HepG2 (cell line): ENCODE measurements at regions of chr4 and their contacts with region 1.

Region 1: GRCh38 chr4:99949034-99949998 is 759 bp downstream of the H2AZ1 start:
- DNase-seq: peak; percentile 92
- ATAC-seq: peak; percentile 16
- H3K4me3 ChIP-seq: peak overlapping the region; percentile 88 to 96 (median 92)
- H3K27ac ChIP-seq: peak overlapping the region; percentile 98
- H3K4me1 ChIP-seq: peaks cover 33% of the 10 kb centered on the region
- H3K27me3 ChIP-seq: no peaks in the 10 kb centered on the region; a peak in 1 of 5 replicates
- CTCF ChIP-seq: peak; percentile 89
- EP300 ChIP-seq: 0 out of 4 replicates have a peak, but pooled peaks of 1 of the 2 experiments have one; percentile 20
- POLR2A ChIP-seq: peak; percentile 32 to 56; a peak in 2 of 4 replicates
- RAD21 ChIP-seq: peak; percentile 29; the same call in 1 of the 2 replicates

Region 2: DNA sequence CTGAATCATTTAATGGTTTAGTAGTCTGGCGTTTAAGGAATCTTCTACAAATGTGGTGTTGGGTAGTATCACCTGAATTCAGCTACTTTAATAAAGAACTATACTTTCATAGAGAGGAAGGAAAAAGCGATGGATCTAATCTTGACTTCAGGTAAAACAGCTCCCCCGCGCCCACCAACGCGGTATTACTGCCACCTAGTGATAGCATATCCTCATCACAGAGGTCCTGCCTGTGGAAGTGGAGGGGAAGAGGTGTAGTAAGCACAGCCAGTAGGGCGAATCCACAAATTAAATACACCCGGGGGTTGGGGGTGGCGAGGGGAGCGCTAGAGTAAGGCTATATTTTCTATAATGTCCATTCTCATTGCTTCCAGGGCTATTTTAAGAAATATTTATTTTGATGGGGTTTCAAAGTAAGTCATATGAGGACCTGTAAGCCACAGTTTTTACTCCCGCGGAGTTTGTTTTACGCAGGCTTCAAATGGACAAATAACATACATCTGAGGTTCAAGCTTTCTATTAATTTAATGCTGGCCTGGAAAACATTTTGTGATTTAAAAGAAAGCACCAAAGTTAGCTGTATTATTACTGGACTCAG is 141.0 kb before region 1 on chr4:
- CTCF ChIA-PET with region 1: no interaction called
- POLR2A ChIA-PET with region 1: no interaction called
- in situ Hi-C with region 1: loop called (anchors 5 kb)
- intact Hi-C with region 1: no loop called
- DNase-seq: peak; percentile 49
- ATAC-seq: peak; percentile 96
- H3K4me3 ChIP-seq: no peak overlapping the region
- H3K27ac ChIP-seq: no peak overlapping the region
- H3K4me1 ChIP-seq: no peaks in the 10 kb centered on the region
- H3K27me3 ChIP-seq: no peaks in the 10 kb centered on the region; a peak in 1 of 5 replicates
- CTCF ChIP-seq: peak; percentile 89
- EP300 ChIP-seq: no peak
- POLR2A ChIP-seq: no peak
- RAD21 ChIP-seq: peak; percentile 73

Region 3: GRCh38 chr4:99894161-99894997 is 54.9 kb before region 1 on chr4 and contains the start of gene LAMTOR3:
- CTCF ChIA-PET with region 1: no interaction called
- POLR2A ChIA-PET with region 1: interaction called, 20 read pairs
- in situ Hi-C with region 1: loop called (anchors 5 kb)
- intact Hi-C with region 1: loop called (anchors 1 kb)
- DNase-seq: peak; percentile 86
- ATAC-seq: peak; percentile 99
- H3K4me3 ChIP-seq: peak within 1 kb of the TSS; percentile 87 to 98 (median 94)
- H3K27ac ChIP-seq: peak within 1 kb of the TSS; percentile 76
- H3K4me1 ChIP-seq: peaks cover 23% of the 10 kb centered on the region
- H3K27me3 ChIP-seq: no peaks in the 10 kb centered on the region; a peak in 1 of 5 replicates
- CTCF ChIP-seq: no peak
- EP300 ChIP-seq: no peak
- POLR2A ChIP-seq: peak; percentile 64 to 77
- RAD21 ChIP-seq: no peak
- total RNA-seq, gene LAMTOR3: 47.6 and 81.0 TPM in 2 replicates